ENCODE measurements at regions of chr6 and their contacts with region 1.

Region 1: GRCh38 chr6:90144396-90144795 is 152.2 kb downstream of the BACH2 start:
- DNase-seq: peak; percentile 84
- H3K4me3 Mint-ChIP-seq: peak overlapping the region; percentile 49
- H3K27ac Mint-ChIP-seq: peak overlapping the region; percentile 91
- H3K4me1 Mint-ChIP-seq: peaks cover 88% of the 10 kb centered on the region
- H3K27me3 Mint-ChIP-seq: no peaks in the 10 kb centered on the region

Region 2: DNA sequence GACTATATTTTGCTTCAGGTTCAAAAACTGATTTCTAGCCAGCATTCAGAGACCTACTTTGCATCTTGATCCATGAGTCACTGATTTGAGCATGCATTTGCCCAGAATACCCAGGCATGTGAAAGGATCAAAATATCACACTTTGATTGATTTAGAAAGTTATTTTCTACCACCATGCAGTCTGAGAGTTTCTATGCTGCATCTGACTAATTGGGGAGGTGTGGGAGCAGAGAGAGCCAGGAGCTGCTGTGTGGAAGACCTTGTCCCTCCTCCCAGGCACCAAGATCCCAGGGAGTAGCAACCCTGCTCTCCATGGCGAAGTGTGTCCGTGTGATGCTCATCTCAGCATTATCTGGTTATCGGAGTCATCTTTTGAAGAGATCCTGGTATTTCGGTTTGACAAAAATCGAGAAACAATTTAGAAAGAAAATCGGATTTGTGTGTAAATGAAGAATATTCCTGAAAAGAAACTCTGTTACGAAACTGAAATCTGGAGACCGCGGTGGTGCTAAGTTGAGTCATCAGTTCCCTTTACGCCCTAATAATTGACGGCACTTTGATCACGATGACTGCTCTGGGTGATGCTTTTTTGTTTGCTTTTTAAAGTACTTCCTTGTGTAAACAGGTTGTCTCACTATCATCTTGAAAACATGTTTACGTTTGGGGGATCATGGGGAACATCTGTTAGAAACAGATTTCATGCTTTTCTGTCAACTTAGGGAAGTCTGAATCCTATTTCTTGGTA is 41.2 kb before region 1 on chr6:
- CTCF ChIA-PET with region 1: interaction called, 4 read pairs
- intact Hi-C with region 1: loop called (anchors 1 kb)
- DNase-seq: peak; percentile 53
- H3K4me3 Mint-ChIP-seq: peak overlapping the region; percentile 45
- H3K27ac Mint-ChIP-seq: peak overlapping the region; percentile 79
- H3K4me1 Mint-ChIP-seq: peaks cover 93% of the 10 kb centered on the region
- H3K27me3 Mint-ChIP-seq: no peaks in the 10 kb centered on the region

Region 3: DNA sequence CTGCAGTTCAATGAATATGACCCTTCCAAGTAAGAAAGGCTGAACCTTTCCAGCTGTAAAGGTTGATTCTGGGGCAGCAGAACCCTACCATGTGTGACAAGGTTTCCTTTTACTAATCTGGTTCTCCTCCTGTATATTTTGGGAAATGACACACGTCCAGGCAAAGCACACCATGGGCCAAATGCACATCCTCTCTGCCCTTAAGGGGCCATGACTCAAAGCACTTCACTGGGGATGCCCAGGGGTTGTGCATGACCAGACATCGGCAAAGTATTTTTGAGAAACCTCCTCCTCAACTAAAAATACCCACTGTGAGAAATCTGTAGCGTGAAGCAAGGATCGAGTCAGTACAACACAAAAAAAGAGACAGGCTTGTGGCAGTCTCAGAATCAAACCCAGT is 22.4 kb before region 1 on chr6:
- CTCF ChIA-PET with region 1: no interaction called
- intact Hi-C with region 1: loop called (anchors 1 kb)
- DNase-seq: peak; percentile 82
- H3K4me3 Mint-ChIP-seq: no peak overlapping the region
- H3K27ac Mint-ChIP-seq: peak overlapping the region; percentile 88
- H3K4me1 Mint-ChIP-seq: peaks cover 89% of the 10 kb centered on the region
- H3K27me3 Mint-ChIP-seq: no peaks in the 10 kb centered on the region

Region 4: DNA sequence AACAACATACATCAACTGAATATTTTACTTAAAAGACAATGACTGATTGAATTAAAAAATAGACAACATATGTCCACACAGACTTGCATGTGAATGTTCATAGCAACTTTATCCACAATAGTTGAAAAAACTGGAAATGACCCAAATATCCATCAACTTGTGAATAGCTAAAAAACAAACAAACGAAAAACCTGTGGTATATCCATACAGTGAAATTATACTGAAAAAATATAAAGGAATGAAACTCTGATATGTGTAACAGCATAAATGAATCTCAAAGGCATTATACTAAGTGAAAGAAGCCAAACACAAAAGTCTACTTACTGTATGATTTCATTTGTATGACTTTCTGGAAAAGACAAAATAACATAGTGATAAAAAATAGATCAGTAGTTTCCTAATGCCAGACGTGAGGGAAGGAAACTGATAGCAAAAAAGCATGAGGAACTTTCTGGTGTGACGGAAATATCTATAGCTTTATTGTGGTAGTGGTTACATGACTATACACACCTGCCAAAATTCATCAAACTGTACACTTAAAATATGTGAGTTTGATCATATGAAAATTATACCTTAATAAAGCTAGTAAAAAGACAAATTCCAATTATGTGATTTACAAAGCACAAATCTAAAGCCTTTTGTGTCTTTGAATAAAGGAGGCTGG is 29.0 kb after region 1 on chr6:
- CTCF ChIA-PET with region 1: interaction called, 7 read pairs
- intact Hi-C with region 1: loop called (anchors 1 kb)
- DNase-seq: no peak
- H3K4me3 Mint-ChIP-seq: no peak overlapping the region
- H3K27ac Mint-ChIP-seq: peak overlapping the region; percentile 80
- H3K4me1 Mint-ChIP-seq: peaks cover 87% of the 10 kb centered on the region
- H3K27me3 Mint-ChIP-seq: no peaks in the 10 kb centered on the region

Region 5: DNA sequence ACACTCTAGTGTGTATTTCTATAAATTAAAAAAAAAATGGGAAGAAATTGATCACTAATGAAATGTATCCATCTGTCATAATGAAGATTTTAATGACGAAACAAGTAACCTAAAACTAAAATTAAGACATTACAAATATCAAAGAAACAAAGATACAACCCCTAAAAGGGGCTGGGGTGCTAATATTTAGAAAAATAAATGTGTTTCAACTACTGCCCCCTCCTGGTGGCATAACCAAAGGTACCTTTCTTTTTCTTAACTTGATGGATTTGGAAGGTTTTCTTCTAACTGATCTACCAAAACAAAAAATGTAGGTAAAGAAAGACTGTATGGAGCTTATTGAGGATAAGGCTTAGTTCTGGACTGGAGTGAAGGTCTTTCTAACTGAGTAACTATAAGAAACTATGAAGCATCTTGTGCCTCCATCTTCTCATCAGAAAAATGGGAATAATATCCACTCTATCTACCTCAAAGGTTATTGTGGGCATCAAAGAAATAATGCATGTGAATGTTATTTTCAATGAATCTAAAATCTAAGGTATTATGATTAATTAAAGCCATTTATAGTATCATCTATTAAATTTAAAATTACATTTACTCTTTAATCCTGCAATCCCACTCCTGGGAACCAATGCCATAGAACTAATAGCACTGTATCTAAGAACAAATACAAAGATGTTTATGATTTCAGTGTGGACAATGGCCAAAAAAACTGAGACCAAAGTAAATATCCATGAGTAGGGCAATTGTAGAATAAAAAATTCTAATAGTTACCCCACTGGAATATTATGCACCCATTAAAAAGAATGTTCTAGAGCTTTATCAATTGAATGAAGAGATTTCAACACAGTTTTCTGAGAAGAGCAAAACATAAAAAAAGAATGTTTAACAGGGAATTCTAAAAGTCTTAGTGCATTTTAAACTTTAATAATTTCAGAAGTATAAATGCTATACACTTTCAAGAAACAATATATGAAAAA is 35.1 kb after region 1 on chr6:
- CTCF ChIA-PET with region 1: interaction called, 7 read pairs
- intact Hi-C with region 1: loop called (anchors 1 kb)
- DNase-seq: peak; percentile 56
- H3K4me3 Mint-ChIP-seq: no peak overlapping the region
- H3K27ac Mint-ChIP-seq: peak overlapping the region; percentile 85
- H3K4me1 Mint-ChIP-seq: peaks cover 81% of the 10 kb centered on the region
- H3K27me3 Mint-ChIP-seq: no peaks in the 10 kb centered on the region

Region 6: GRCh38 chr6:90197854-90198496 is 53.6 kb after region 1 on chr6:
- CTCF ChIA-PET with region 1: no interaction called
- intact Hi-C with region 1: loop called (anchors 2 kb)
- DNase-seq: peak; percentile 47
- H3K4me3 Mint-ChIP-seq: no peak overlapping the region
- H3K27ac Mint-ChIP-seq: peak overlapping the region; percentile 80
- H3K4me1 Mint-ChIP-seq: peaks cover 92% of the 10 kb centered on the region
- H3K27me3 Mint-ChIP-seq: no peaks in the 10 kb centered on the region

Measured in activated naive CD4-positive, alpha-beta T cell treated with anti-CD3 and anti-CD28 coated beads for 36 hours (primary cell).